ENCODE measurements at regions of chr14 and their contacts with region 1.

Region 1: DNA sequence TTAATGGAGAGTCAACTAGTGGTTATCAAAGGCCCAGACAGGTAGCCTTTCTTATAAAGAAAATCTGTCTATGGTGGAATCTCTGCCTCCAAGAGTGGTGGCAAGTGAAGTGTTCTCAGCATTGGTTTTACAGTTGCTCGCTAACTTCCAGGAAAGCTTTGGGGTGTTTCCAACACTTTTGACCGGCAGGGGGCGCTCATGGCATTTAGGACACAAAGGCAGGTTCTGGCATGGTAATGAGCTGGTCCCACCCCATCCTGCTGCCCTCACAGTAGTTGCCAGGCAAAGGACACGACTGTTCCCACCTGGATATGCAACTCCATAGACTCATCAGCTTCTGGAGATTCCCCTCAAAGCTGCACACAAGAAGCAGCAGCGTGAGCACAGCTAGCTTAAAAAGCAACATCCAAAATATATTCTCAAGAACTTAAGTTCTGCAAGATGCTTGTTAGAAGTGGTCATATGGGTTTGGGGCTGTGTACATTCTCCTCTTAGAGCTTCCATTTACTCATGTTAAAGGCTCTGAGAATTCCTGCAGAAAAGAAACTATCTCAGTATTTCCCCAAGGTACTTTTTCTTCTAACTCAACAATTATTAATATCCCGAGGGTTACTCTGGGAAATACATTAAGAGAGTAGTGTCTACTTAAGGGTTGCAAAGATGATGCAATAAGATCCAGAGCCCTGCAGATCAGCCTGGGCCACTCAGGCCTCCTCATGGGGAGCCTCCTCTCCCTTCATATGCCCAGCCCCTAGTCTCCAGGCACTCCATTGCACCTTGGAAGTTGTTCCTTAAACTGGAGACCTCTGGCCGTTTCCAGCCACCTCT is 14.8 kb downstream of the PROX2 start:
- DNase-seq: peak; percentile 78 to 97
- ATAC-seq: peak; percentile 91

Region 2: DNA sequence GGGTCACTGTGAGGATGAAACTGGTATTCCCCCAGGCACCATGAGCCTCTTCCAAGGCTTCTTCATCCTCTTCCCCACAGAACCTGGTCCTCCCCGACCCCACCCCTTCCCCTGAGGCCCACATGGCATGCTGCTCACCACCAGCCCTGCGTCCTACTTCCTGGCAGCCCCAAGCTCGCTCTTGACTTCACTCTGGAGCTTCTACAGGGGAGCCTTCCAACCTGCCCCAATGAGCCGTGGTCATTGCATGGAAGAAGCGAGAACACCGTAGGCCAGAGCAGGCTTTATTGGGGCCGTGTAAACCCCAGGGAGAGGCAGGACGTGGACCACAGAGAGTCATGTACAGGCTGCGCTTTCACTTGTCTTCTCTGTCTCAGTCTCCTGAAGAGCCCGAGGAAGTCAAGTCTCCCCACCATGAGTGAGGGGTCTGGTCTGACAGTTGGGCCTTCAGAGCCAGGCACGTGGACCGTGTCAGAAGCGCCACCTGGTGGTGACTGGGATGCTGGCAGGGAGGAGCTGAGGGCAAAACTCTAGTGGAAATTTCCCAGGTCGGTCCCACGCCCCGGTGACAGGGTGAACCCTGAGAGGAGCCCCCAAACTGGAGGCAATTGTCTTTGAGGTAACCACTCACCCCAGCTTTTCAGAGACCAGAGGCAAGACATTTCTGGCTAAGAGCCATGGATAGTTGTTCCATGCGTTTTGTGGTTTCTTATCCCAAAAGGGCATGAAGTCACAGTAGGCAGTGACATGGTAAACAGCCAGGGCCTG is 44.4 kb after region 1 on chr14:
- intact Hi-C with region 1: loop called (anchors 5 kb)
- DNase-seq: peak in 1 of 2 donors; percentile 84
- ATAC-seq: peak; percentile 39